Activated T-helper 1 cell treated with anti-CD3 and anti-CD28 coated beads, Interleukin-12 subunit alpha, Interleukin-12 subunit beta, Interleukin-2, Interleukin-4 antibody, amounts not matched to agents 30 ng/mL and 10 ng/mL and 1 ng/mL, durations not matched to agents 14 hours and 24 hours and 36 hours (primary cell): ENCODE measurements at regions of chr12 and their contacts with region 1.

Region 1: GRCh38 chr12:105053116-105053572 is 31.1 kb downstream of the ALDH1L2 start:
- DNase-seq: peak; percentile 67
- H3K4me3 Mint-ChIP-seq: no peak overlapping the region
- H3K27ac Mint-ChIP-seq: peak overlapping the region; percentile 25
- H3K4me1 Mint-ChIP-seq: peaks cover 15% of the 10 kb centered on the region
- H3K27me3 Mint-ChIP-seq: no peaks in the 10 kb centered on the region

Region 2: GRCh38 chr12:104201238-104202001 is 851.7 kb before region 1 on chr12:
- intact Hi-C with region 1: loop called (anchors 1 kb)
- DNase-seq: peak; percentile 24
- H3K4me3 Mint-ChIP-seq: no peak overlapping the region
- H3K27ac Mint-ChIP-seq: no peak overlapping the region
- H3K4me1 Mint-ChIP-seq: peaks cover 4% of the 10 kb centered on the region
- H3K27me3 Mint-ChIP-seq: peaks cover 12% of the 10 kb centered on the region

Region 3: DNA sequence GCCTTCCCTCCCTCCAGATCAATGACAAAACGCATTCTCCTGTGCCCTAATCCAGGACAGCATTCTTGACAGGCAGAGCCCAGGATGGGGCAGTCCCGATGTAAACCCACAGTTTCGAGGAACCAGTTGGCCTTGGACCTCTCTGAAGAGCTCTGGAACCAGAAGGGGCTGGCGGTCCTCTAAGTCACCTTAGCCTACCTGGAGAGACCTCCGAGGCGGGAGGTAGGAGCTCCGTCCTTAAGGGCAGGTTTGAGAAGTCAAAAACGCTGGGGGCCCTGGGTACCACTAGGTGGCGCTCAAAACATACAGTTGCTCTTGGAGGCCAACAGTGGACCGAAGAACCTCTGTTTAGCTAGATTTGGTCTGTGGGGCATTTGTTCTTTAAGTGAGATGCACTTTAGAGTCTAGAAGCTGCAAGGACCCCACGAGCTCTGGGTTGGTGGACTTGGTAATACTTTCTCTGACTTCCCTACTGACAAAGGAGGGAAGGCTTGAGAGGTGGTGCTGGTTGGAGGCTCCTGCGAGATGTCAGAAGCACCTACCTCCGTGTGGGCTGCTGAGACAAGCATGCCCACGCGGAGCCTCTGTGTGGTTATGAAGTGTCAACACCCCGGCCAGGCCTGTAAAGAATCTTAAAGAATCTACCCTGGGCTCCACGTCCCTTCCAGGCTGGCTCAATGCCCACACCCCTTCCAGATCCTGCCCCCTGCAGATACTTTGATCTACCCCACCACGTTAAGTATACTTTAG is 671.2 kb before region 1 on chr12:
- intact Hi-C with region 1: loop called (anchors 1 kb)
- DNase-seq: peak; percentile 69
- H3K4me3 Mint-ChIP-seq: peak overlapping the region; percentile 52
- H3K27ac Mint-ChIP-seq: peak overlapping the region; percentile 33
- H3K4me1 Mint-ChIP-seq: peaks cover 20% of the 10 kb centered on the region
- H3K27me3 Mint-ChIP-seq: peaks cover 2% of the 10 kb centered on the region

Region 4: DNA sequence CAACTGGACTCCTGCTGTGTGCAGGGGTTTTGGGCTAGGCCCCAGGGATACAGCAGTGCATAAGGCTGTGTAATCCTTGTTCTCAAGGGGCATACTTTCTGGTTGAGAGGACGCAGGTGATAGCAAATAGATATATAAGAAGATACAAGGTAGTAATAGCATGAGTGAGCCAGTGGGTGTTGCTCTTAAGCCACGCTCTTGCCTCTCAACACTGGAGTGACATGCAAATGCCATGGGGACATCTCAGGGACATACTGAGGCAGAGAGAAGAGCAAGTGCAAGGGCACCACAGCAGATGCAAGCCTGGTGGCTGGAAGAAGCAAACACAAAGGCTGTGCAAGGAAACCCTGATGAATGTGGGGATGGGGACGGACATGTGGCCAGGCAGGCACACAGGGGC is 373.1 kb before region 1 on chr12:
- intact Hi-C with region 1: loop called (anchors 1 kb)
- DNase-seq: no peak
- H3K4me3 Mint-ChIP-seq: no peak overlapping the region
- H3K27ac Mint-ChIP-seq: peak overlapping the region; percentile 85
- H3K4me1 Mint-ChIP-seq: peaks cover 84% of the 10 kb centered on the region
- H3K27me3 Mint-ChIP-seq: no peaks in the 10 kb centered on the region

Region 5: GRCh38 chr12:104877123-104877705 is 175.9 kb before region 1 on chr12:
- intact Hi-C with region 1: loop called (anchors 2 kb)
- DNase-seq: no peak
- H3K4me3 Mint-ChIP-seq: no peak overlapping the region
- H3K27ac Mint-ChIP-seq: no peak overlapping the region
- H3K4me1 Mint-ChIP-seq: peaks cover 21% of the 10 kb centered on the region
- H3K27me3 Mint-ChIP-seq: peaks cover 2% of the 10 kb centered on the region

Region 6: GRCh38 chr12:104986022-104986941 is 66.9 kb before region 1 on chr12 and contains the start of gene NOPCHAP1:
- intact Hi-C with region 1: loop called (anchors 1 kb)
- DNase-seq: peak; percentile 83
- H3K4me3 Mint-ChIP-seq: peak within 1 kb of the TSS; percentile 89
- H3K27ac Mint-ChIP-seq: peak within 1 kb of the TSS; percentile 57
- H3K4me1 Mint-ChIP-seq: peaks cover 44% of the 10 kb centered on the region
- H3K27me3 Mint-ChIP-seq: peaks cover 3% of the 10 kb centered on the region
- total RNA-seq, gene NOPCHAP1: 28.0 and 40.0 TPM in 2 replicates